Activated naive CD4-positive, alpha-beta T cell treated with anti-CD3 and anti-CD28 coated beads for 36 hours (primary cell): ENCODE measurements at regions of chr12 and their contacts with region 1.

Region 1: GRCh38 chr12:95003213-95003920 is at the start of gene NDUFA12:
- DNase-seq: peak; percentile 97
- H3K4me3 Mint-ChIP-seq: peak within 1 kb of the TSS; percentile 89
- H3K27ac Mint-ChIP-seq: peak within 1 kb of the TSS; percentile 86
- H3K4me1 Mint-ChIP-seq: peaks cover 51% of the 10 kb centered on the region
- H3K27me3 Mint-ChIP-seq: no peaks in the 10 kb centered on the region
- total RNA-seq, gene NDUFA12: 147 to 160 TPM

Region 2: DNA sequence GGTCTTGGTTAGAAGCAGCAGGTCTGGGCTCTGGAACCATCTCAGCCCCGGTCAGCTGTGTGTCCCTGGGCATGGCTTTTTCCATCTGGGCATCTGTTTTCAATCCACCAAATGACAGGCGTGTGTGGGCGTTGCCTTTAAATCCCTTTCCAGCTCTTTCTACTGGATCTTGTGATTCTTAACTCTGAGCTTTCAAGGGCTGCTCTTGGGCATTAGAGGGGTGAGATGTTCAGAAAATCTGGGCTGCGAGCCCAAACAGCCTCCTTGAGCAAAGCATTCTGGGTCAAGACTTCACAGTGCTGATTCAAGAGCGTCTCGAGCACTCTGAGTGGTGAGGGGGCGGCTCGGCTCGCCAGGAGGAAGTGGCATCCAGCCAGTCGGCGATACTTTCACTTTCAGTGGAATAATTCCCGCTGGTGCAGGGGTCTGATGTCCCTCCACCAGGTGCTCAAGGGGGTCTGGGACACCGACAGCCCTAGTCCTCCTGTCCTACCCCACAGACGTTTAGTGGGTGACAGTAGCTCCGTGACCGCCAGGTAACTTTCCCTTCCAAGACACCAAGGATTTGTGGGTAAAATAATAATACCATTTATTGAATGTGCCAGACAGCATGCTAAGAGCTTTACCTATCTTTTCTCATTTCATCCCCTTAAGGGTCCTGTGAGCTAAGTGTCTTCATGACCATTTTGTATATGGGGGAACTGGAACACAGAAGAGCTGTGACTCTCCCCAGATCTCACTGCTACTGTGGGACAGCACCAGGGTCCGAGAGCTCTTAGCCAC is 740.9 kb before region 1 on chr12:
- CTCF ChIA-PET with region 1: no interaction called
- intact Hi-C with region 1: loop called (anchors 5 kb)
- DNase-seq: peak; percentile 83
- H3K4me3 Mint-ChIP-seq: peak overlapping the region; percentile 89
- H3K27ac Mint-ChIP-seq: peak overlapping the region; percentile 96
- H3K4me1 Mint-ChIP-seq: peaks cover 31% of the 10 kb centered on the region
- H3K27me3 Mint-ChIP-seq: no peaks in the 10 kb centered on the region

Region 3: DNA sequence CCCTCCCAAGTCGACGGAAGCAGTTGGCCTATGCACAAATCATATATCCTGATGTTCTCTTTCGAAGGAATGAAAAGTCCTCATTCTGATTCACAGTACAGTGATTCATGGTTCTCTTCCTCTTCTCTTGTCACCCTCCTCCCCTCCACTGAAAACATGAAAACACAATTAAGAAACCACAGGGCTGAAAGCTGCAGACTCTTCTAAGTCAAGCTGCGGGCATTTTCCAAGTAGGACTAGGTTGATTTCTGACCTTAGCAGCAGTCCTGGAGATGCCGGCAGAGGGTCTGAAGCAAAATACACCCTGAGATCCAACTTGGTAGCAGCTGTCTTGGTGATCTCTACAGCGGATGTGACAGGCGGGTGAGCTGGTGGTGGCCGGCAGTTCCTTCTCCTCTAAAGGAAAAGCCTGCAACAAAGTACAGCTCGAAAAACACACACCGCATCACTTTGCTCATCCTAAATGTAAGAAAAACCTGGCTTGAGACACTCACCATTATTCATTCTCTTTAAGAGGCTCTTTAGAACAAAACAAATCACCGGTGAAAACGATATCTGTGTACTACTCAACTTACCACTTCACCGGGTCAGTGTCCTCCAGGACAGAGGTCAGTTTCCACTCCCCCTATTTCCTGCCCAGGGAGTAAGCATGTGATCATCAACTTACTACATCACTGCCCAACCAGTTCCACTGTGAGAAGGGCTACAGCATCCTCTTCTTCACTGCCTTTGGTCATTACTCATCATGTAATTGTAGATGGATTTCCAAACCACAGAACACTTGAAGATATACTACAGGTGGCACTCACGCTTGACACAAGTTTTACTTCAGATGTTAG is 359.0 kb before region 1 on chr12:
- CTCF ChIA-PET with region 1: no interaction called
- intact Hi-C with region 1: loop called (anchors 5 kb)
- DNase-seq: peak; percentile 18
- H3K4me3 Mint-ChIP-seq: peak overlapping the region; percentile 8
- H3K27ac Mint-ChIP-seq: no peak overlapping the region
- H3K4me1 Mint-ChIP-seq: peaks cover 27% of the 10 kb centered on the region
- H3K27me3 Mint-ChIP-seq: peaks cover 50% of the 10 kb centered on the region

Region 4: DNA sequence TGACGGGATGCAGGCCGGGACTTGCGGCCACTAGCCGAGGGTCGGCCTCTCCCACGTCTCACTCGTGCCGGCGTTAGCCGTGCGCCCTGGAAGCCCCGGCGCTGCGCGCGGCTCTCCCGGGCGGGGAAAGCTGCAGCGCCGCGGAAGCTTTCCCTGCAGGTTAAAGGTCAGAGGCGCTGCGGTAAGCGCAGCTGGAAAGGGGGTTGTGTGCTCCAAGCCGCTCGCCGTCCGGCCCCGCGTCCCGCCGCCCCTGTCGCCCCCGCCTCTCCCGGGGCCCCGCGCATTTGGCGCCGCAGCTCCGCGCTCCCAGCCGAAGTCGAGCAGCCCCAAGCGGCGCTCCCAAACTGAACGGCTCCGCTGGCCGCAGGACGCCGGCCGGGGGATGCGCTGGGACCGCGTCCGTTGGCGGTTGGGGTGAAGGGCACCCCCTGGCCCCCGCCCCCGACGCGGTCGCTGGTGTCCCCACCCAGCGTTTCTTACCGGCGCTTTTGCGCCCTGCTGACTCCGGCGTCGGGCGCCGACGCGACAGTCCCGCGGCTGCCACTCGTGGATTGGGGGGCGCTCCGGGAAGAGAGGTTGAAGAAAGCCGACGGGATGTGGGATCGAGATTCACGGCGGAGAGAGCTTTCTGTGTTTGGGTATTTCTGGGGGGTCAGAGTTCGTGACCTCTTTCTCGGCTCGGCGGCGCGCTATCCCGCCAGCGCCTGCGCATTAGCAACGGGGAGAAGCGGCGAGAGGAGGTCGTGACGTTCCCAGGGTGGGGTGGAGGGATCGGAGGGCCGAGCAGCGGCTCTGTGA is 69.7 kb after region 1 on chr12 and contains the start of gene NR2C1:
- CTCF ChIA-PET with region 1: no interaction called
- intact Hi-C with region 1: loop called (anchors 1 kb)
- DNase-seq: peak; percentile 95
- H3K4me3 Mint-ChIP-seq: peak within 1 kb of the TSS; percentile 92
- H3K27ac Mint-ChIP-seq: peak within 1 kb of the TSS; percentile 63
- H3K4me1 Mint-ChIP-seq: peaks cover 19% of the 10 kb centered on the region
- H3K27me3 Mint-ChIP-seq: no peaks in the 10 kb centered on the region
- total RNA-seq, gene NR2C1: 19.8 to 24.6 TPM

Region 5: GRCh38 chr12:95548539-95549391 is 545.4 kb after region 1 on chr12:
- CTCF ChIA-PET with region 1: no interaction called
- intact Hi-C with region 1: loop called (anchors 2 kb)
- DNase-seq: peak; percentile 75
- H3K4me3 Mint-ChIP-seq: peak overlapping the region; percentile 89
- H3K27ac Mint-ChIP-seq: peak overlapping the region; percentile 80
- H3K4me1 Mint-ChIP-seq: peaks cover 41% of the 10 kb centered on the region
- H3K27me3 Mint-ChIP-seq: no peaks in the 10 kb centered on the region